Heart left ventricle (tissue), 16 donors: ENCODE measurements at regions of chr22 and their contacts with region 1.

Region 1: GRCh38 chr22:46726066-46726985 is 11.7 kb downstream of the CERK start:
- DNase-seq: peak in 2 of 5 donors; percentile 55 to 61
- ATAC-seq: peak; percentile 12 to 38 (median 29)
- H3K4me3 ChIP-seq: no peak overlapping the region
- H3K27ac ChIP-seq: peak overlapping the region in 7 of 12 donors; percentile 11 to 68 (median 24)
- H3K4me1 ChIP-seq: peaks cover 24 to 71% (median 60%) of the 10 kb centered on the region in 12 donors
- H3K27me3 ChIP-seq: no peaks in the 10 kb centered on the region
- CTCF ChIP-seq: no peak
- POLR2A ChIP-seq: no peak

Region 2: GRCh38 chr22:46425016-46425415 is 301.3 kb before region 1 on chr22:
- intact Hi-C with region 1: no loop called
- DNase-seq: no peak
- ATAC-seq: no peak
- H3K4me3 ChIP-seq: no peak overlapping the region
- H3K27ac ChIP-seq: no peak overlapping the region
- H3K4me1 ChIP-seq: peaks cover 0 to 7% (median 0%) of the 10 kb centered on the region in 12 donors
- H3K27me3 ChIP-seq: no peaks in the 10 kb centered on the region
- CTCF ChIP-seq: no peak
- POLR2A ChIP-seq: no peak

Region 3: DNA sequence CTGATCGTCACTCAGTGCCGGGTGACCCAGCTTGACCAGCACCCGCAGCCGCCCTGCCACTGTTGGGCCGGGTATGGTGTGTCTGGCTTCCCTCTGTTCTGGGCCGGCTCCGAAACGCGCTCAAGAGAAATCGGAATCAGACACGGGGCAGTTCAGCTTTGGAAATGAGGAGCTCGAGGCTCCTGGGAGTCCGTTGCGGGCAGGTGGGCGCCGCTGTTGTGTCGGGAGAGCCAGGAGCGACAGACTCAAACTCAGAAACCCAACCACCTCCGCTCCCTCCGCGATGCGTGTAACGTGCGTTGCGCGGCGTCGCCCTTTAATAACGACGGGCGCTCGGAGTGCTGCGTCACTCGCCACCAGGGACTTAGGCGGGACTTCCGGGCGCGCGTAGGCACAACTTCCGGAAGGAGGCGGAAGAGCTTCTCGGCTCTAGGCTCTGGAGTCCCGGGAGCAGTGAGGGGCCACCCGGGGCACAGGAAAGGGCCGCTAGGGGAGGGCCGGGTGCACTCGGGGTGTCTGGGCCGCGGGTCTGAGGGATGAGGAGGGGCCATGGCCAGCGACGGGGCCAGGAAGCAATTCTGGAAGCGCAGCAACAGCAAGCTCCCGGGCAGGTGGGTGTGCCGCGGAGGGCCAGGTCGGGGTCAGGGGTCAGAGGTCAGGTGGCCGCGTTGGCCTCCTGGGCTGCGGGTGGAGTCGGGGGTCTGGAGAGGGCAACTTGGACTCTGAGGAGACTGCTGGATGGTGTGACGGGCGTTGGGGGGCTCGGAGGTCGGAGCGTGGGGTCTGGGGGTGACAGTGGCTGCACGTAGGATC is 36.1 kb after region 1 on chr22 and contains the start of gene TBC1D22A:
- intact Hi-C with region 1: loop called in 1 of 10 experiments (anchors 5 kb)
- DNase-seq: peak; percentile 93 to 98 (median 95)
- ATAC-seq: peak; percentile 94 to 96 (median 95)
- H3K4me3 ChIP-seq: peak within 1 kb of the TSS; percentile 70 to 99 (median 88)
- H3K27ac ChIP-seq: peak within 1 kb of the TSS; percentile 85 to 99 (median 94)
- H3K4me1 ChIP-seq: peaks cover 0 to 60% (median 36%) of the 10 kb centered on the region in 12 donors
- H3K27me3 ChIP-seq: no peaks in the 10 kb centered on the region
- CTCF ChIP-seq: peak in 3 of 12 donors; percentile 7 to 9 (median 7)
- POLR2A ChIP-seq: peak; percentile 85 to 98
- total RNA-seq, gene TBC1D22A: 14.0 to 30.7 (median 18.6) TPM

Region 4: GRCh38 chr22:46876357-46876934 is 150.1 kb after region 1 on chr22:
- intact Hi-C with region 1: no loop called
- DNase-seq: no peak
- ATAC-seq: no peak
- H3K4me3 ChIP-seq: no peak overlapping the region
- H3K27ac ChIP-seq: no peak overlapping the region
- H3K4me1 ChIP-seq: peaks cover 0 to 9% (median 0%) of the 10 kb centered on the region in 12 donors
- H3K27me3 ChIP-seq: no peaks in the 10 kb centered on the region
- CTCF ChIP-seq: no peak
- POLR2A ChIP-seq: no peak